ENCODE measurements at regions of chr12 and their contacts with region 1.

Region 1: GRCh38 chr12:39103552-39104165 is 198.3 kb upstream of the CPNE8 start:
- DNase-seq: no peak
- ATAC-seq: peak; percentile 86

Region 2: DNA sequence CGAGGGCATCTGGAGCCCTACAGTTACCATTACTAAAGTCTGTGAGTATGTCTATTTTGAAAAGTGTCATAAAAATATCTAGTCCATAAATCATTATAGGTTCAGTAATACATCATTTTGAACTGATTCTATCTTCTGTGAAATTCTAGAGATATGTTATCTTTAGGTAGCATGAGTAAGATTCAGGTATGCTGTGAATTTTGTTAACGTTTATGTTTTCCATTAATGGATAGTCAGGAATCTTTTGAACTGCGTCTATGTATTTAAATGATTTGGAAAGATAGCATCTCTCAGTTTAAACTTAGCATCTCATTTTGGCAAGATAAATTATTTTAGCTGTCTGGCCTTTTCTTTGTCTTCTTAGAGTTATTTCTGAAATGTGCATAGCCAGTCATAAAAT is 778.8 kb before region 1 on chr12:
- intact Hi-C with region 1: loop called (anchors 10 kb)
- DNase-seq: no peak
- ATAC-seq: no peak

Region 3: GRCh38 chr12:38921025-38921677 is 182.5 kb before region 1 on chr12:
- intact Hi-C with region 1: loop called (anchors 1 kb)
- DNase-seq: peak; percentile 33
- ATAC-seq: peak; percentile 60

Region 4: DNA sequence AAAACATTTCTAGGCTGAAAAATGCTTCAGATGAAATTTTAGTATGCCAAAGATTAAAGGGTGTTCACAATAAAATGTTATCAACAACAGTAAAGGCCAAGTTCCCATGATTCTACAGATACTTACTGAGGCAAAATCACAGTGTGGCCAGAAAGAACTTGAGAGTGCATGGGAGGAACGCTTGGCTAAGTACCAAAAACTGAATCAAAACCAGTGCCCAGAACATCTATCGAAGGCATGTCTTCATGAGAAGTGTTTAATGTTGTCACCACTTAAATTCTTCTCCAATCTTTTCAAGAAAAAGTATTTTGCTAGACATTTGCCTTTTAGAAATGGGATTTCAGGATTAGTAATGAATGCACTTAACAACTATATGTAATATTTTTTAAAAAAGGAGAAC is 297.8 kb after region 1 on chr12:
- intact Hi-C with region 1: no loop called
- DNase-seq: no peak
- ATAC-seq: peak; percentile 68

Measured in left ventricle myocardium superior (tissue), 1 donor.